Stomach (tissue), 19 donors: ENCODE measurements at regions of chr6 and their contacts with region 1.

Region 1: DNA sequence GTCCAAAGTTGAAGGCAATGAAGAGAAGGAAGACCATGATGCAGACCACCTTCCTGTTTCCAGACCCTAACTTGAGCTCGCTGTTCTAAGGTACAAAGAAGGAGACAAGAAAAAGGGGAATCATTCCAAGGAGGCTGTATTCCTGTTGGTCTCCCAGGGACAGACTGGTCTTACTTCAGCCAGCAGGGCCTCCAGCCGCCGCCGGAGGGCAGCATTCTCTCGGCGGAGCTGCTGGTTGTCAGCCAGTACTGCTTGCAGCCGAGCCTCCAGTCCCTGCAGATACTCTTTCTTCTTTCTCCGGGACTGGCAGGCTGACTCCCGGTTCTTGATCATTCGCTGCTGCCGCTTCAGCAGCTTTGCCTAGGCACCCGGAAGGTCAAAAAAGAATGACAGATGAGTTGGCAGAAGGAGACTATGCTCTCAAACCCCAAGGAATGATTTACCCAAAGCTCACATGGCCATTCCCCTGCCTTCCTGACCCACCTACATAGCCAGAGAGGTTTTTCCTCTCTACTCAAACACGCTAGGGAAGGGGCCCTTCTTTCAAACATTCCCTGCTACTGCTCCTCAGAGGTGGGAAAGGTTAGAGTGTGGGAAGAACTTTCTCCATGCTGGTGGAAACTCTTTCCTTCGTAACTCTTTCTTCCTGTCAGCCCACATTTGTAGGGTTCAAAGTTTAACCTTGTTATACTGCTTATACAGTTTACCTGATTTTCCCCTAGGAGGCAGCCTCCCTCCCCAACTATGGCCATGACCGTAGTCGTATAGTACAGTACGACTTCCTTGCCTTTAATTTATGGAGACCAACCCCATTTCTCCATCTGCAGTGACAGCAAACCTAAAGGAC is 9.0 kb downstream of the ATF6B start:
- DNase-seq: peak; percentile 90 to 96
- H3K4me3 ChIP-seq: no peak overlapping the region
- H3K27ac ChIP-seq: peak overlapping the region; percentile 15 to 72 (median 50)
- H3K4me1 ChIP-seq: peaks cover 11 to 39% (median 21%) of the 10 kb centered on the region in 4 donors
- H3K27me3 ChIP-seq: no peaks in the 10 kb centered on the region
- CTCF ChIP-seq: peak in 6 of 7 experiments; percentile 49 to 95 (median 88)
- EP300 ChIP-seq: no peak
- POLR2A ChIP-seq: no peak

Region 2: GRCh38 chr6:32153564-32154513 is 34.8 kb after region 1 on chr6 and contains the start of gene PPT2:
- intact Hi-C with region 1: loop called (anchors 5 kb)
- DNase-seq: peak; percentile 82 to 98
- H3K4me3 ChIP-seq: peak within 1 kb of the TSS; percentile 59 to 87 (median 78)
- H3K27ac ChIP-seq: peak within 1 kb of the TSS; percentile 88 to 94 (median 93)
- H3K4me1 ChIP-seq: peaks cover 37 to 75% (median 62%) of the 10 kb centered on the region in 4 donors
- H3K27me3 ChIP-seq: peaks cover 0 to 27% (median 0%) of the 10 kb centered on the region in 3 donors
- CTCF ChIP-seq: no peak
- EP300 ChIP-seq: no peak
- POLR2A ChIP-seq: no peak
- total RNA-seq, gene PPT2: 5.8 to 73.0 (median 35.7) TPM